ENCODE measurements at regions of chr19 and their contacts with region 1.

Region 1: DNA sequence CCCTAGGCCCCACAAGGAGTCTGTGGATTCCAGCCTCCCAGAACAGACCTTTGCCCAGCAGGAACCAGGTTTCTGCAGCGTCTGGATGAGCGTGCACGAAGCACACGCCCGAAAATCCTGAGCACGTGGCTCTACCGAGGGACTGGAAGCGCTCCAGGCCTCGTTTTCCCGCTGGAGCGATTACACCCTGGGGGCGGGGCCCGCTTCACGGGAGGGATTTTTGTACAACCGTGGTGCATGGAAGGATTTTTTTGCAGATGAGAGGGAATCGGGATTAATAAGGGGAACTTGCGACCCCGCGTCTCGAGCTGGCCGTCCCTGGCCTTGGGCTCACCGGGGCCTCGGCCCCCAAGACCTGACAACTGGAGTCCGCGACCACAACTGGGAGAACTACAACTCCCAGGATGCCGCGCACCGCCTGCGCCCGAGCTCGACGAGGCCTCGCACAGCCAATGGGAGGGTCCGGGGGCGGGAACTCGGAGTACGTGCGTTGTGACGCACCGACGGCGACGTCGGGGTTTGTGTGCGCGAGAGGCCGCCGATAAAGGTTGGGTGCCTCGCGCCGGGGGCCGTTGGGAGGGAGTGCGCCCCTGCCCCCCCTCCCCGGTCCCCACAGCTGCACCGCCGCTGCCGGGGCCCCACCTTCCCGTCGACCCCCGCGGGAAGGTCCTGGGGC is at the start of gene ZNF628:
- DNase-seq: peak; percentile 97
- ATAC-seq: peak; percentile 90
- H3K4me3 Mint-ChIP-seq: peak within 1 kb of the TSS; percentile 91
- H3K27ac Mint-ChIP-seq: peak within 1 kb of the TSS; percentile 89
- H3K4me1 Mint-ChIP-seq: peaks cover 33% of the 10 kb centered on the region
- H3K27me3 Mint-ChIP-seq: no peaks in the 10 kb centered on the region
- CTCF ChIP-seq: no peak
- total RNA-seq, gene ZNF628: 10.4 and 12.7 TPM in 2 replicates

Region 2: GRCh38 chr19:54463531-54464043 is 1012.7 kb before region 1 on chr19 and contains the start of gene LENG9:
- CTCF ChIA-PET with region 1: no interaction called
- POLR2A ChIA-PET with region 1: no interaction called
- intact Hi-C with region 1: loop called (anchors 2 kb)
- DNase-seq: peak; percentile 85
- ATAC-seq: peak; percentile 61
- H3K4me3 Mint-ChIP-seq: peak within 1 kb of the TSS; percentile 82
- H3K27ac Mint-ChIP-seq: peak within 1 kb of the TSS; percentile 90
- H3K4me1 Mint-ChIP-seq: peaks cover 28% of the 10 kb centered on the region
- H3K27me3 Mint-ChIP-seq: no peaks in the 10 kb centered on the region
- CTCF ChIP-seq: no peak
- total RNA-seq, gene LENG9: 6.3 and 8.5 TPM in 2 replicates

Region 3: GRCh38 chr19:55339048-55339888 is 137.0 kb before region 1 on chr19 and contains the start of gene KMT5C:
- CTCF ChIA-PET with region 1: no interaction called
- POLR2A ChIA-PET with region 1: interaction called, 8 read pairs
- intact Hi-C with region 1: loop called (anchors 2 kb)
- DNase-seq: peak; percentile 99
- ATAC-seq: peak; percentile 81
- H3K4me3 Mint-ChIP-seq: peak within 1 kb of the TSS; percentile 95
- H3K27ac Mint-ChIP-seq: peak within 1 kb of the TSS; percentile 90
- H3K4me1 Mint-ChIP-seq: peaks cover 31% of the 10 kb centered on the region
- H3K27me3 Mint-ChIP-seq: peaks cover 7% of the 10 kb centered on the region
- CTCF ChIP-seq: no peak
- total RNA-seq, gene KMT5C: 7.2 and 8.1 TPM in 2 replicates

Region 4: DNA sequence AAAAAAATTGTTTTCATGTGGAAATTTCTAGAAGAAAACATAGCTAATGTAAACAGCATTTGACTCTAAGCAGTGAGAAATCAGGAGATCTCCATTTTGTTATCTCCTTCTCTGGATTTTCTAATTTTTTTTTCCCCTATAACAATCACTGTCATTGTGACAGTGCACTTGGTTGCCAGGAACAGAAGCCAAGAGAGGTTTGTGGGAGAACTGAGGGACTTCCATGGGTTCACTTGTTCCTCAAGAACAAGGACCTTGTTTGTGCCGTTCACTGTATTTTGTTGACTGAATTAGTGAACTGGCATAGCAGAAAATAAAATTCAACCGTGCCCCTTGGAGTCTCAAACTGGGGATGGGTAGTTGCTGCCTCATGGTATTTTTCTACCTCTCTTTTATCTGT is 50.2 kb before region 1 on chr19:
- CTCF ChIA-PET with region 1: no interaction called
- POLR2A ChIA-PET with region 1: no interaction called
- intact Hi-C with region 1: no loop called
- DNase-seq: no peak
- ATAC-seq: no peak
- H3K4me3 Mint-ChIP-seq: no peak overlapping the region
- H3K27ac Mint-ChIP-seq: no peak overlapping the region
- H3K4me1 Mint-ChIP-seq: no peaks in the 10 kb centered on the region
- H3K27me3 Mint-ChIP-seq: peaks cover 36% of the 10 kb centered on the region
- CTCF ChIP-seq: no peak

Region 5: GRCh38 chr19:55452749-55453346 is 23.4 kb before region 1 on chr19:
- CTCF ChIA-PET with region 1: no interaction called
- POLR2A ChIA-PET with region 1: no interaction called
- intact Hi-C with region 1: no loop called
- DNase-seq: no peak
- ATAC-seq: no peak
- H3K4me3 Mint-ChIP-seq: no peak overlapping the region
- H3K27ac Mint-ChIP-seq: no peak overlapping the region
- H3K4me1 Mint-ChIP-seq: peaks cover 20% of the 10 kb centered on the region
- H3K27me3 Mint-ChIP-seq: peaks cover 11% of the 10 kb centered on the region
- CTCF ChIP-seq: no peak

Region 6: GRCh38 chr19:55503502-55504251 is 27.4 kb after region 1 on chr19:
- CTCF ChIA-PET with region 1: interaction called, 29 read pairs
- POLR2A ChIA-PET with region 1: interaction called, 21 read pairs
- intact Hi-C with region 1: loop called (anchors 2 kb)
- DNase-seq: peak; percentile 97
- ATAC-seq: peak; percentile 95
- H3K4me3 Mint-ChIP-seq: peak overlapping the region; percentile 88
- H3K27ac Mint-ChIP-seq: peak overlapping the region; percentile 91
- H3K4me1 Mint-ChIP-seq: peaks cover 11% of the 10 kb centered on the region
- H3K27me3 Mint-ChIP-seq: peaks cover 3% of the 10 kb centered on the region
- CTCF ChIP-seq: peak; percentile 79

Region 7: GRCh38 chr19:55586976-55587668 is 110.9 kb after region 1 on chr19:
- CTCF ChIA-PET with region 1: no interaction called
- POLR2A ChIA-PET with region 1: no interaction called
- intact Hi-C with region 1: no loop called
- DNase-seq: peak; percentile 89
- ATAC-seq: peak; percentile 96
- H3K4me3 Mint-ChIP-seq: peak overlapping the region; percentile 85
- H3K27ac Mint-ChIP-seq: peak overlapping the region; percentile 72
- H3K4me1 Mint-ChIP-seq: peaks cover 29% of the 10 kb centered on the region
- H3K27me3 Mint-ChIP-seq: no peaks in the 10 kb centered on the region
- CTCF ChIP-seq: no peak

Region 8: DNA sequence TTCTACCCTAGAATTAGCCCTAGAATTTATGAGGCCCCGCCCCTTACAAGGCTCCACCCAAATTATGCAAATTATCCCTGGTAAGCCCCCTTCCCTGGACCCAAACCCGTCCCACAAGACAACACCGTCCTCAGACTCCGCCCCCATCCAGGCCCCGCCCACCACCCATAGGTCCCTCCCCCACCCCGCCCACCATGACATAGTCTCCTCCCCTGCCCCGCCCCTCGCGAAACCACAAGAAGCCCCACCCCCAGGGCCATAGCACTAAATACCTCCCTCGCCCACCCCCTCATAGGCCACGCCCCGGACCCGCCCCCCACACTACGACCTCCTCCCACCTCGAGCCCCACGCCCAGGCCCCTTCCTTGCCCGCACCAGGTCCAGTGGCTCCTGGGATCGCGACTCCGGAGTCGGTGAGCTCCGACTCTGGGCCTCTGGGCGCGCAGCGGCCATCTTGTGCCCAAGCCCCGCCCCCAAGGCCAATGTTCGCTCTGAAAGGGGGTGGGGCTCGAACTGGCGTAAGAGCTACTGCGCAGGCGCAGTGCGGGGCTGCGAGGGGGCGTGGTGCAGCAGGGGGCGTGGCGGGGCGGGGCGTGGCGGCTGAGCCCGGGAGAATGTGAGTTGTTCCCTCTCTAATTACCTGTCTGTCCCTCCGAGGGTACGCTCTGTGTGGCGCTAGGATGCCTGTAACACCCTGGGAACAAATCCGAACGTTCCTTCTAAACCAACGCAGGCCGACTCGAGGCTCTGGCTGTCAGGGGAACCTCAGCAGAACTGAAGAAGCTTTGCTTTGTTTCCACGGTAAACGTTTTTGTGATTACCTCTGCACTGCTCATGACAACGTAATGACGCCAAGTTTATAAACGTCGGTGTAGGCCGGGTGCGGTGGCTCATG is 148.1 kb after region 1 on chr19 and contains the start of gene ZNF784:
- CTCF ChIA-PET with region 1: no interaction called
- POLR2A ChIA-PET with region 1: interaction called, 4 read pairs
- intact Hi-C with region 1: loop called (anchors 1 kb)
- DNase-seq: peak; percentile 93
- ATAC-seq: peak; percentile 85
- H3K4me3 Mint-ChIP-seq: peak within 1 kb of the TSS; percentile 94
- H3K27ac Mint-ChIP-seq: peak within 1 kb of the TSS; percentile 97
- H3K4me1 Mint-ChIP-seq: peaks cover 17% of the 10 kb centered on the region
- H3K27me3 Mint-ChIP-seq: no peaks in the 10 kb centered on the region
- CTCF ChIP-seq: no peak
- total RNA-seq, gene ZNF784: 8.7 and 8.9 TPM in 2 replicates

Region 9: DNA sequence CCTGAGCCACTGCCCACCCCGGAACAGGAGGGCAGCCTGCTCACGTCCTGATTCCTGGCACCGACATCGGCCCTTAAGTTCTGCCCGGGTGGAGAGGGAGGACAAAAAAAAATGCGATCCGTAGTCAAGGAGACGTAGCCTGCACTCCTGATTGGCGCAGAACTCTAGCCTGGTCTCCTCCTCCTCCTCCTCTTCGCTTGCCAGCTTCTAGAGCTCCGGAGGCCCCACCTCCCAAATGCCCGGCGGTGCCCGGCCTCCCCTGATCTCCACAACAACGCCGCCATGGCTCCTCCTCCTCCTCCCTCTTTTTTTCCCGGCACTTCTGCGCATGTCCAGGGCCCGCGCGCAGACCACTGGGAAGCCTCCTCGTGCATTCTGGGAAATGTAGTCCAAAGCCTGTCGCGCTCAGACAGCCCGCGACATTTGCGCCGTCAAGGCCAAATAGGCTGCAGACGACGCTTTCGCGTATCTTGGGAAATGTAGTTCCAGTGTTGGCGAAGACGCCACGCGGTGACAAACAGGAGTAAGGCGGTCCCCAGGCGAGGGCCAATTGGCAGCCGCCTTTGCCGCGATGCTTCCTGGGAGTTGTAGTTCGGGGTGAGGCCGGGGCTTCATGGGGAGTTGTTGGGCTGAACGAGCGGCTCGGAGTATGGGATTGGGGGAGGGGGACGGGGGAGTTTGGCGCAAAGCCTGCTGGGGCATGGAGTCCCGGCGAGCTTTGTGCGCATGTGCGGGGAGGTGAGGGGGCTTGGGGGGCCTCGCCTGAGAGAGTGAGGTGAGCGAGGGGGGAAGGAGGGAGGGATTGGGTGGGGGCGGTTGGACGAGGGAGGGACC is 664.6 kb after region 1 on chr19 and contains the start of gene ZNF444:
- CTCF ChIA-PET with region 1: no interaction called
- POLR2A ChIA-PET with region 1: no interaction called
- intact Hi-C with region 1: loop called (anchors 2 kb)
- DNase-seq: peak; percentile 96
- ATAC-seq: peak; percentile 86
- H3K4me3 Mint-ChIP-seq: peak within 1 kb of the TSS; percentile 98
- H3K27ac Mint-ChIP-seq: peak within 1 kb of the TSS; percentile 99
- H3K4me1 Mint-ChIP-seq: peaks cover 29% of the 10 kb centered on the region
- H3K27me3 Mint-ChIP-seq: no peaks in the 10 kb centered on the region
- CTCF ChIP-seq: no peak
- total RNA-seq, gene ZNF444: 28.1 and 32.1 TPM in 2 replicates